ENCODE measurements at regions of chr2 and their contacts with region 1.

Region 1: DNA sequence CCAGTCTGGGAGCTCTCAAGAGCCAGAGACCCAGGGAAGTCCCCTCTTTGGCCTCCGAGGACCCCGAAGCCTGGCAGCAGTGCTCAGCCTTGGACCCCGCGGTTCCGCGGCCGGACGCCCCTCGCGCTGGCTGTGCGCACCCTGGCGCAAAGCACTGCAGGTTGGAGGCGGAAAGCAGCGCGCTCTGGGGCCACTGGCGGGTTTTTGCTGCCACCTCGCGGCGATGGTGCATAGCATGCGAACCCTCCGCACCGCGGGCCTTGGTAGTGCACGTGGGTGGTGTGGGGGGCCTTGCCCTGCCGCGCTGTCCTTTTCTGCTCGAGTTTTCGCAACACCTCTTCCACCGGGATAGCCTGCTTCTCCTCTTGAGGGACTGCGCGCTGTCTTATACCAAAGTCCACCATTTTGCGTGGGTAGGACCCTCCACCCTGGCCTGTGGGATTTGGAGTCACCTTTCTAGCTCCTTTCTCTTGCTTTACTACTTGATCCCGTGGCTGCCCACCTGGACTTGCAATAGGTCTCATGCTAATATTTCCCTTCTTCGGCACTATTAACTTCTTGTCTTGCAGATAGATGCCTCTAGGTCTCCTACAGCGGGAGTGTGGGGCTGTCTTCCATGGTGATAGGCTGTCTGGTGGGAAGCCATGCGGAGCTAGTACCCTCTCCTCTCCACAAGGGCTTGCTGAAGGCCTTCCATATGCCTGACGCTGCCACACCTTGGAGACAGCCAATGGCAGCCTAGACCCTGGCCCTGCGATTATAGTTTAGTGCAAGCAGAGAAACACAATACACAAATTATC is 14.3 kb downstream of the SIX3 start:
- DNase-seq: peak; percentile 67
- H3K4me3 ChIP-seq: peak overlapping the region; percentile 58
- H3K27ac ChIP-seq: no peak overlapping the region
- H3K4me1 ChIP-seq: peaks cover 37% of the 10 kb centered on the region
- H3K27me3 ChIP-seq: peaks cover 100% of the 10 kb centered on the region
- CTCF ChIP-seq: peak; percentile 91

Region 2: DNA sequence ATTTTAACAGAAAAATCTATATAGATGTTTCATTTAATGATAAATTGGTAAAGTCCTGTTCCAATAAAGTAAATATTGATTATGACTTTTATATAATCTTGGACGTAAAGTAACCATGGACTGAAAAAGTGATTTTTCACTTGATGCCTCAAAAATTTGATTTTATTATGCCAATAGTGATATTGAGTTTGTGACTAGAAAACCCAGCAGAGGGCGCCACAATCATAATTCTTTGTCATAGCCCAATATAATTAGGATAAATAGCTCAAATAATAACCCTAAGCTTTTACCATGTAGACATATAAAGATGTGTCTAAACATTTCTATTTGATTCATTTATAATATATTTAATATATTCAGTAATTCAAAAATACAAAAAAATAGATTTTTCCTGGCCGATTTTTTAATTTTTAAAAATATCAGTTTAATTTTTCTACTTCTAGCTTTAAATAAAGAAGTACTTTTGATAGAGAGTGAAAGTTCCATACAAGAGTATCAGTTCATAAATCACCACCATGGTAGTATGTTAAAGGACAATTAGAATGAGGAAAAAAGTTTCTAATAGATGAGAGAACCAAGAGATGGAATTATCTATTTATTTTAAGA is 563.4 kb before region 1 on chr2:
- intact Hi-C with region 1: loop called (anchors 10 kb)
- DNase-seq: no peak
- H3K4me3 ChIP-seq: no peak overlapping the region
- H3K27ac ChIP-seq: no peak overlapping the region
- H3K4me1 ChIP-seq: no peaks in the 10 kb centered on the region
- H3K27me3 ChIP-seq: no peaks in the 10 kb centered on the region
- CTCF ChIP-seq: peak; percentile 69

Region 3: DNA sequence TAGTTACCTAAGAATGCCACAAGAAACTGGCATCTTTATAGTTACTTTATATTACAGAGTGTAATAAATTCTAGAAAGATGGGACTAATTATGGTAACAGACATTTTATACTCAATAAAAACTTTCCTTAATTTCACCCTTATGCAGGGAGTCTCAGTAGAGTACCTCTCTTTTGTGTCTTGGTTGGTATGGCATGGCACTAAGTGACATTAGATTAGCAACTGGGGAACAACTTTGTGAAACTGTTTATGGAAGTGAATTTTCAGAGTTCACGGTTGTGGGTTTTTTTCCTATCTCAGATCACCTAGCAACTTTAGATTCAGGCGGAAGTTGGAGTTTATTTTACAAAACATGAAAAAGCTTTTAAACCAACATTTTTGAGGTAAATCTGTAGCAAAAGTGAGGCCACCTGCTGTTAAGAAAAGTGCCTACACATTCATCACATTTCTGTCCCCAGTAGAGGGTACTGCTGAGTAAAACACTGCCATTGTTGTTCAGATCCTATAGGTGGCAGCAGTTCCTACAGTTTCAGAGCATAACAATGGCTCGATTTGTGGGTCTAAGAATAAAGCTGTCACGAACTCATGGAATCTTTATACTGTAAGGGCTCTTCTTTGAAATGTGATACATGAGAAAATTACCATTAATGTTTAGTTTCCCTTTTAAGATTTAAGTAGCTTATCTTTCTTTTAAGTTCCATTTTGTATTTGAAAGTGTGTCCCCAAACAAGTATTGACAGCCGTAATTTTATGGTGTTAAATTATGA is 476.5 kb before region 1 on chr2:
- intact Hi-C with region 1: loop called (anchors 10 kb)
- DNase-seq: no peak
- H3K4me3 ChIP-seq: no peak overlapping the region
- H3K27ac ChIP-seq: no peak overlapping the region
- H3K4me1 ChIP-seq: no peaks in the 10 kb centered on the region
- H3K27me3 ChIP-seq: no peaks in the 10 kb centered on the region
- CTCF ChIP-seq: peak; percentile 99

Measured in left ventricle myocardium inferior (tissue), 1 donor.